ENCODE measurements at regions of chr1 and their contacts with region 1.

Region 1: DNA sequence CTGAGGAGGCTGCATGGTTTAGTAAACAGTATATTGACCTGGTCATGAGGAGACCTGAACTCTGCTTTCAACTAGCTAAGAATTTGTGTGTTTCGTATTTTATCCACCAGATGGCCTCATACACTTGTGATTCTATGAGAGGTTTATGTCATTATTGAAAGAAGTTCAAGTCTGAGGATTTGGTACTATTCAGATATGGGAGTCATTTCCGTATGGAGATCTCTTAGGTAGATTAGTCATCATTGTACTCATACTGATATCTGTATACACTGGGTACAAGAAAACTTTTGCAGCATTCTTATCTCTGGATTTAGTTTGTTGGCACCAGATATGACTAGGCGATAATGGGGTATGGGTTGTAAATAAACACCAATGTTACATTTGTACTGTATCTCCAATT is 26.6 kb downstream of the ATF6 start:
- DNase-seq: no peak
- ATAC-seq: no peak
- H3K4me3 ChIP-seq: no peak overlapping the region
- H3K27ac ChIP-seq: no peak overlapping the region
- H3K4me1 ChIP-seq: no peaks in the 10 kb centered on the region
- H3K27me3 ChIP-seq: no peaks in the 10 kb centered on the region

Region 2: DNA sequence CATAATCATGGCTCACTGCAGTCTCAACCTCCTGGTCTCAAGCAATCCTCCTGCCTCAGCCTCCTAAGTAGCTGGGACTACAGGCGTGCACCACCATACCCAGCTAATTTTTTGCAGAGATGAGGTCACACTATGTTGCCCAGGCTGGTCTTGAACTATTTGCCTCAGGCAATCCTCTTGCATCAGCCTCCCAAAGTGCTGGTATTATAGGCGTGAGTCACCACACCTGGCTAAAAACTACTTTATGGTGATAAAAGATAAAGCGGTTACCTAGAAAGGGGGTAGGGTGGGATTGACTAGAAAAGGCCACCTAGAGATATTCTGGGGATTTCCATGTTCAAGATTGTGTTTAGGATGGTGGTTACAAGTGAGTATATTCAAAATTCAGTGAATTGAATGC is 759.0 kb before region 1 on chr1:
- intact Hi-C with region 1: no loop called
- DNase-seq: no peak
- ATAC-seq: no peak
- H3K4me3 ChIP-seq: no peak overlapping the region
- H3K27ac ChIP-seq: no peak overlapping the region
- H3K4me1 ChIP-seq: no peaks in the 10 kb centered on the region
- H3K27me3 ChIP-seq: no peaks in the 10 kb centered on the region

Region 3: GRCh38 chr1:161816201-161816600 is 23.5 kb after region 1 on chr1:
- intact Hi-C with region 1: no loop called
- DNase-seq: no peak
- ATAC-seq: no peak
- H3K4me3 ChIP-seq: no peak overlapping the region
- H3K27ac ChIP-seq: no peak overlapping the region
- H3K4me1 ChIP-seq: no peaks in the 10 kb centered on the region
- H3K27me3 ChIP-seq: no peaks in the 10 kb centered on the region

Region 4: GRCh38 chr1:161855260-161855659 is 62.5 kb after region 1 on chr1:
- intact Hi-C with region 1: loop called (anchors 5 to 10 kb)
- DNase-seq: no peak
- ATAC-seq: no peak
- H3K4me3 ChIP-seq: no peak overlapping the region
- H3K27ac ChIP-seq: no peak overlapping the region
- H3K4me1 ChIP-seq: no peaks in the 10 kb centered on the region
- H3K27me3 ChIP-seq: no peaks in the 10 kb centered on the region

Region 5: DNA sequence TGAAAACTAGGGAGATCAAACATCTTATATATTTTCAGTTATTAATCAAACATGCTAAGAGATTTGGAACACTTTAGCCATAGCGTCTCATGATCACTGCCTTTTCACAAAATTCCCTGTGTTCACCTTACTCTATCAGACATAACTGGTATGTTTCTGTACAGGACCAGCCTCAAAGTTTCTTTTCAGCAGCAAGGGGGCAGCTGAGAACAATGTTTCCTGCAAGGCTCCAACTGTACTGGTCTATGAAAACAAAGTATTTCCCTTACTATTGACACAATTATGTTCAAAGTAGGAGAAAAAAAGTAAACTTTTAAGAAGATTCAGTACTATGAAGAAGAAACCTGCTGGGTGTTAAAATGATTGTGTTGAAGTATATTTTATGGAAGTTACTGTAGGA is 71.8 kb after region 1 on chr1:
- intact Hi-C with region 1: loop called (anchors 5 to 10 kb)
- DNase-seq: peak in 1 of 2 donors; percentile 52
- ATAC-seq: peak; percentile 74
- H3K4me3 ChIP-seq: no peak overlapping the region
- H3K27ac ChIP-seq: no peak overlapping the region
- H3K4me1 ChIP-seq: no peaks in the 10 kb centered on the region
- H3K27me3 ChIP-seq: no peaks in the 10 kb centered on the region

Measured in aorta (tissue), 5 donors.